ENCODE measurements at regions of chr6 and their contacts with region 1.

Region 1: GRCh38 chr6:25179051-25179778 is 100.0 kb upstream of the CARMIL1 start:
- DNase-seq: peak; percentile 55
- H3K4me3 Mint-ChIP-seq: peak overlapping the region; percentile 49
- H3K27ac Mint-ChIP-seq: peak overlapping the region; percentile 90
- H3K4me1 Mint-ChIP-seq: peaks cover 66% of the 10 kb centered on the region
- H3K27me3 Mint-ChIP-seq: no peaks in the 10 kb centered on the region

Region 2: GRCh38 chr6:25085756-25086155 is 93.5 kb before region 1 on chr6:
- intact Hi-C with region 1: loop called (anchors 5 kb)
- DNase-seq: no peak
- H3K4me3 Mint-ChIP-seq: no peak overlapping the region
- H3K27ac Mint-ChIP-seq: peak overlapping the region; percentile 32
- H3K4me1 Mint-ChIP-seq: peaks cover 22% of the 10 kb centered on the region
- H3K27me3 Mint-ChIP-seq: no peaks in the 10 kb centered on the region